Posterior cingulate gyrus (tissue), 11 donors: ENCODE measurements at regions of chr4 and their contacts with region 1.

Region 1: DNA sequence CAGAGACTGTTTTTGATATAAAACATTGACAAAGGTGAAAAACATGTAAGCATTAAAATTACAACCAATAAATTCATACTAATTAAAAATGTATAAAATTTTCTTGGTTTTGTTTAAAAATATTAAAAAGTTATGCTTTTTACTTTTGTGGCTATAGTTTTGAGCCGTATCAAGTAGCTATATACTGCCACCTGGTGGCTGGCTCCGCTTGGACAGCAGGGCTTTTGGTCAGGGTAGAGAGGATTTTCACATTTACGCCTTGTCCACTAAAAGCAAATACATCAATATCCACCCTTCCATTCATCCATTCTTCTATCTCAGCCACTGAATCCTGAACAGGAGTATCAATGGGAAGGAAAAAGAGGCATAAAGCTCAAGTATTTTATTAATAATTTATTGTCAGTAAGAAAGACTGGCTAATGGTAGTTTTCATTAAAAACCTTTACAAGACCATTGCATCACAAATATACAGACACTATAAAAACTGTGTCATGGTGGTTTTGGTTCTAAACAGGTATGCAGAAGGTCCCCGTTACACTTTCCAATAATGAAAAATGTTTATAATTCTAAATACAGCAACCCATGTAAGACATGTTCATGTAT is 32.1 kb upstream of the MTNR1A start:
- DNase-seq: peak; percentile 35 to 94 (median 78)

Region 2: GRCh38 chr4:186296481-186296880 is 291.0 kb before region 1 on chr4:
- intact Hi-C with region 1: loop called (anchors 1 kb)
- DNase-seq: no peak

Region 3: DNA sequence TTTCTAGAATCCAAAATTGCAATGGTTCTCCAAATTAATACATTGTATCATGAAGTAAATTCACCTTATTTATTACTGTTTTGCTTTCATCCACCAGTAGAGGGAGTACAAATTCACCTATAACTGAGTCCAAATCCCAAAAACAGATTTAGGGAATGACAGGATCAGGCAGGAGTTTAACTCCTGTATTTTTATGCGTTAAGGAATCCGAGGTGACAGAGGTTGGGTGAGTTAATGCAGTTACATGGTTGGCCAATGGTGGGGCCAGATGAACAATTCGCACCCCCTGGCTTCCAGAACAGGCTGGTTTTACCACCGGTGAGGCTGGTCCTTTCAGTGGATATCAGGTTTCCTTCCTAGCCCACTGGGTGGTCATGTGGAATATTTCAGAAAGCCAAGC is 114.6 kb before region 1 on chr4:
- intact Hi-C with region 1: loop called (anchors 5 kb)
- DNase-seq: no peak